RWPE1 (cell line): ENCODE measurements at regions of chr1 and their contacts with region 1.

Region 1: GRCh38 chr1:15172405-15173259 is 19.1 kb downstream of the TMEM51 start:
- DNase-seq: peak; percentile 71
- H3K27ac ChIP-seq: peak overlapping the region; percentile 92
- CTCF ChIP-seq: no peak

Region 2: DNA sequence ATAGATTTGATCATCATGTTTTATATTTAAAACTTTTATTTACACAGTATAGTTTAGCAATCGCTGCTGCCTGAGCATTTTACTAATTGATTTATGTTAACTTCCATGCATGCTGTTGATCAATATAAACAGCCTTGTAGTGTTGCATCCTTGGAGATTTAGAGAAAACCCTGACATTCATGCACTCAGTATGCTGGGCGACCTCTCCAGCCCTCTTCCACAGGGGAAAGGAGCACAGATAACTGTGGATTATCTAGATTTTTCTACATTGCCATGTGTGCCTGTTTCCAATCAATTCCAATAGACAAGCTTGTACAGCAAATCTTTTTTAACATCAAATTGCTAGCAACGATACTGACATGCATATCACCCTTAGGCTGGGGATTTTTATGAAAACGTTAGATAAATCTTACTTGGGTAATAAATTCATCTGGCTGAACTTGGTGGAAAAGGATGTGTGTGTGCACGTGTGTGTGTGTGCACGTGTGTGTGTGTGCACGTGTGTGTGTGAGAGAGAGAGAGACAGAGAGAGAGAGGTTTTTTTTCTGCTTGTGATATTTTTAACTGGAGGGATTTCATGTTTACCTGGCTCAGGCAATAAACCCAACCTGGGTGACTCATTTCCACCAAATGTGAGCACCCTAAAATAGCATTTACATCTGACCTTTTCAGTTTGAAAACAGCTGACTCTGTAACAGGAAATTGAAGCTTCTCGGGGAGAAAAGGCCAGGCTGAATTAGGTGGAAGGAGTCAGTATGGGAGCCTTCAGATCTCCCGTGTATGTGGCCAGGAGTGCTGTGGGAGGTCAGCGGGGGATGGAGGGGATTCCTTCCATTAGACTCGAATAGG is 1132.8 kb before region 1 on chr1:
- CTCF ChIA-PET with region 1: no interaction called
- POLR2A ChIA-PET with region 1: interaction called, 10 read pairs
- DNase-seq: peak; percentile 62
- H3K27ac ChIP-seq: peak overlapping the region; percentile 42
- CTCF ChIP-seq: no peak

Region 3: GRCh38 chr1:15028102-15028501 is 144.5 kb before region 1 on chr1:
- CTCF ChIA-PET with region 1: no interaction called
- POLR2A ChIA-PET with region 1: no interaction called
- DNase-seq: peak; percentile 11
- H3K27ac ChIP-seq: no peak overlapping the region
- CTCF ChIP-seq: no peak

Region 4: GRCh38 chr1:15323351-15323988 is 150.8 kb after region 1 on chr1:
- CTCF ChIA-PET with region 1: no interaction called
- POLR2A ChIA-PET with region 1: no interaction called
- DNase-seq: peak; percentile 58
- H3K27ac ChIP-seq: no peak overlapping the region
- CTCF ChIP-seq: peak; percentile 94